Activated CD4-positive, alpha-beta memory T cell treated with anti-CD3 and anti-CD28 coated beads for 36 hours (primary cell): ENCODE measurements at regions of chr2 and their contacts with region 1.

Region 1: DNA sequence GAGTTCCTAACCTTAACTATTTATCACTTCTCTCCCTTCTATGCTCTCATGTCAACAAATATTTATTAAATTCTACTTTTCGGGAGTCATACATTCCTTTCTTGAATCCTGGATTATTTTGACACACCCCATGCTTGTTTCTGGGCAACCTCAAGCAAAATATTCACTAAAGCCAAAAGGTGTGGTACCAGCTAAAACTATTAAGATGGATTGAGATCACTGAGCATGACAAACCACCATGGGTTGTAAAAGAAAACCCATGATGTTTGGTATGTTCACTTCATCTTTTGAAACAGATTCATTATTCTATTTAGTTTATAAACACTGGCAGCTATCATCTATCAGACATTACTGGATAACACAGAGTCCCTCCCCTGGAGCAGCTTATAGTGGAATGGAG is 32.5 kb downstream of the DPP4 start:
- DNase-seq: no peak
- H3K4me3 Mint-ChIP-seq: no peak overlapping the region
- H3K27ac Mint-ChIP-seq: no peak overlapping the region
- H3K4me1 Mint-ChIP-seq: peaks cover 4% of the 10 kb centered on the region
- H3K27me3 Mint-ChIP-seq: no peaks in the 10 kb centered on the region

Region 2: GRCh38 chr2:162025121-162026031 is 16.1 kb before region 1 on chr2:
- CTCF ChIA-PET with region 1: no interaction called
- POLR2A ChIA-PET with region 1: no interaction called
- intact Hi-C with region 1: loop called (anchors 2 kb)
- DNase-seq: no peak
- H3K4me3 Mint-ChIP-seq: no peak overlapping the region
- H3K27ac Mint-ChIP-seq: no peak overlapping the region
- H3K4me1 Mint-ChIP-seq: peaks cover 38% of the 10 kb centered on the region
- H3K27me3 Mint-ChIP-seq: no peaks in the 10 kb centered on the region